ENCODE measurements at regions of chr1 and their contacts with region 1.

Region 1: GRCh38 chr1:27992276-27992675 is 32.5 kb downstream of the XKR8 start:
- DNase-seq: peak; percentile 70
- H3K4me3 Mint-ChIP-seq: no peak overlapping the region
- H3K27ac Mint-ChIP-seq: peak overlapping the region; percentile 57
- H3K4me1 Mint-ChIP-seq: peaks cover 26% of the 10 kb centered on the region
- H3K27me3 Mint-ChIP-seq: no peaks in the 10 kb centered on the region

Region 2: DNA sequence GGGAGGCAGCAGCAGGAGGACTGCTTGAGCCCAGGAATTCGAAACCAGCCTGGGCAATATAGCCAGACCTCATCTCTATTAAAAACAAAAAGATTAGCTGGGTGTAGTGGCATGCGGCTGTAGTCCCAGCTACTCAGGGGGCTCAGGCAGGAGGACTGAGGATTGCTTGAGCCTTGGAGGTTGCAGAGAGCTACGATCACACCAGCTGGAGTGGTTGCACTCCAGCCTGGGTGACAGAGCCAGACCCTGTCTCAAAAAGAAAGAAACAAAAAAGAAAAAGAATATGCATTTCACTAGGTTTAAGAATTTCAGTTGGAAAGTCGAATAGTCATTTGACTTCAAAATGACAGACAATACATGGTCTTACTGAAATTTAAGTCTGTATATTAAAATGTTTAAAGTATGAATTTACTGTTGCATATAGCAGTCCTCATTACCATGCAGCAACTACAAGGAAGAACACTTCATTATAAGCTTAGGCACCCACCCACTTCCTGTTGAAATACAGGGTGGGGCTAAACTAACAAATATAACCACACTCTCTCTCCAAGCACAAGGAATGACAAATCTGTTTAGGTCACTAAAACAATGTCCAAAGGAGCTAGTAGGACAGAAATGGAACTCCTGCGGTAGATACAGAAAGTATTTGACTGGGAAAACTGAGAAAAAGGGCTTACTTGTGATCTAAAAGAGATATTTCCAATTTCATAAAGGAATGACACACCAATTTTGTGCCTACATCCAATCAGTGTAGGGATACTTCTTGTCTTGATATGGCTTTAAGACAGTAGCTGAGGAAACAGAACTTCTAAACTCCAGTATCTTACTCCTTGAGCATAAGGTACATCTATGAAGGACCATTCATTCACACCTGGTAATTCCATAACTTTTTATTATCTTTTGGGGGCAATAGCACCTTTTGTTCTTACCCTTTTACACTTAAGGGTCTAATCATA is 555.8 kb before region 1 on chr1:
- CTCF ChIA-PET with region 1: no interaction called
- intact Hi-C with region 1: no loop called
- DNase-seq: no peak
- H3K4me3 Mint-ChIP-seq: no peak overlapping the region
- H3K27ac Mint-ChIP-seq: peak overlapping the region; percentile 71
- H3K4me1 Mint-ChIP-seq: peaks cover 74% of the 10 kb centered on the region
- H3K27me3 Mint-ChIP-seq: no peaks in the 10 kb centered on the region

Region 3: GRCh38 chr1:27671964-27672749 is 320.1 kb before region 1 on chr1 and contains the start of gene IFI6:
- CTCF ChIA-PET with region 1: no interaction called
- intact Hi-C with region 1: loop called (anchors 10 kb)
- DNase-seq: peak; percentile 89
- H3K4me3 Mint-ChIP-seq: peak within 1 kb of the TSS; percentile 95
- H3K27ac Mint-ChIP-seq: peak within 1 kb of the TSS; percentile 91
- H3K4me1 Mint-ChIP-seq: peaks cover 30% of the 10 kb centered on the region
- H3K27me3 Mint-ChIP-seq: no peaks in the 10 kb centered on the region
- total RNA-seq, gene IFI6: 115 to 125 TPM

Region 4: DNA sequence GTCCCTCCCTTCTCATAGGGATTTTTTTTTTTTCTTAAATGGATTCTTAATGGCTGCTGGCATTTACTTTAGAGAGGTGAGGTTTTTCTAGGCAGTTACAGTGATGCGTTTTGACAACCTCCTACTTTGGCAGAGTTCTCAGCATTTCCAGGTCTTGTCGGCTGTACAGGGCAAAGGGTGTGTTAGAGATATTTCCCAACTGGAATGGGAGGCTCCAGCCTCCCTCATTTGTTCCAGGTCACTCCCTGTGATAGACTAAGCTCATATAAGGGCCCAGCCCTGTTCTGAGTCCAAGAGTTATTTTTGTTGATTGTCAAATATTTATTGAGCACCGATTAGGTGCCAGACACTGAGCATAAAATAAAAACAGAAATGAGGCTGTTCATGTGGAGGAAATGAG is 40.1 kb before region 1 on chr1:
- CTCF ChIA-PET with region 1: no interaction called
- intact Hi-C with region 1: no loop called
- DNase-seq: no peak
- H3K4me3 Mint-ChIP-seq: no peak overlapping the region
- H3K27ac Mint-ChIP-seq: no peak overlapping the region
- H3K4me1 Mint-ChIP-seq: no peaks in the 10 kb centered on the region
- H3K27me3 Mint-ChIP-seq: no peaks in the 10 kb centered on the region

Region 5: GRCh38 chr1:28044399-28044798 is 52.1 kb after region 1 on chr1:
- CTCF ChIA-PET with region 1: no interaction called
- intact Hi-C with region 1: loop called (anchors 5 kb)
- DNase-seq: no peak
- H3K4me3 Mint-ChIP-seq: no peak overlapping the region
- H3K27ac Mint-ChIP-seq: no peak overlapping the region
- H3K4me1 Mint-ChIP-seq: peaks cover 6% of the 10 kb centered on the region
- H3K27me3 Mint-ChIP-seq: no peaks in the 10 kb centered on the region